Psoas muscle (tissue), 8 donors: ENCODE measurements at regions of chr19 and their contacts with region 1.

Region 1: DNA sequence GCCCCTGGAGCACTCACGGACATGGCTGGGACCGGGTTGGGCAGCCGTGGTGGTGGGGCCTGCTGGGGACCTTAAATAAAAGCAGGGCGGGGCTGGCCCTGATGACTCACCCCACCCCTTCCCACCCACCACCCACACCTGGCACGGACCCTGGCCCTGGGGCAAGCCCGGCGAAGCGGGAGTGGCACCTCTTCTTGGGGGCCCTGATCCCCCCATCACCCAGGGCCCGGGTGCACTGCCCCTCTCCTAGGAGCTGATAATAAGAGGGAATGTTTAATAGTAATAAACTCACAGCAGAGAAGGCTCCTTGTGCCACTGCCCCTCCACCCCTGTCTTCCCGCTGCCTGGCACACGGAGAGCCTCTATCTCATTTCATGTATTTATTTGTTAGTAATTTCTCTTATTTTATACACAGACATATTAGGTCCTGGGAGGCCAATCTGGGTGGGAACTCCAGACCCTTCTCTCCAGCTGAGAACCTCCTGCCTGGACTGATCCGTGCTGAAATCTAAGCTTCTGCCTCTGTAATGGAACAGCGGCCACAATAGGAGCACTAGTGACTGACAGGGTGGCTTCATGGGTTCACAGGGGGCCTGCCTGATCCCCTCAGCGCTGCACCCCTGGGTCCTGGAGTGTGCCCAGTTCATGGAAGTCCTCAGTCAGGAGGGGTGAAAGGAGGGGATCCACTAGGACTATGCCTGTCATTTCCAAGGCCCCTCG is at the start of gene LGALS7:
- DNase-seq: peak in 1 of 2 donors; percentile 23
- ATAC-seq: no peak
- H3K4me3 ChIP-seq: no peak within 1 kb of the TSS
- H3K27ac ChIP-seq: no peak within 1 kb of the TSS
- H3K4me1 ChIP-seq: no peaks in the 10 kb centered on the region
- H3K27me3 ChIP-seq: peaks cover 0 to 7% (median 0%) of the 10 kb centered on the region in 3 donors
- CTCF ChIP-seq: no peak
- total RNA-seq, gene LGALS7: not detected

Region 2: DNA sequence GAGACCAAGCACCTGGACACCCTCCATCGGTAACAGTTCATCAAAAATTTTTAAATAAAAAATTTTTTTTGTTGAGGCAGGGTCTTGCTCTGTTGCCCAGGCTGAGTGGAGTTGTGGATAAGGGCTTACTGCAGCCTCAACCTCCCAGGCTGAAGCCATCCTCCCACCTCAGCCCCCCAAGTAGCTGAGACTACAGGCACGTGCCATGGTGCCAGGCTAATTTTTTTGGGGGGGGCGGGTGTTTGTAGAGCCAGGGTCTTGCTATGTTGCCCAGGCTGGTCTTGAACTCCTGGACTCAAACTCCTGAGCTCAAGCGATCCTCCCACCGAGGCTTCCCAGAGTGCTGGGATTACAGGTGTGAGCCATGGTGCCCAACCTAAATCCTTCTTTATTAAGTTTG is 20.0 kb after region 1 on chr19:
- intact Hi-C with region 1: loop called in 1 of 2 experiments (anchors 2 kb)
- DNase-seq: peak in 1 of 2 donors; percentile 30
- ATAC-seq: no peak
- H3K4me3 ChIP-seq: no peak overlapping the region
- H3K27ac ChIP-seq: no peak overlapping the region
- H3K4me1 ChIP-seq: no peaks in the 10 kb centered on the region
- H3K27me3 ChIP-seq: no peaks in the 10 kb centered on the region
- CTCF ChIP-seq: no peak